Activated CD4-positive, alpha-beta memory T cell treated with anti-CD3 and anti-CD28 coated beads for 36 hours (primary cell): ENCODE measurements at regions of chr4 and their contacts with region 1.

Region 1: GRCh38 chr4:169270810-169271691 is at the start of gene SH3RF1:
- DNase-seq: peak; percentile 40
- H3K4me3 Mint-ChIP-seq: peak within 1 kb of the TSS; percentile 67
- H3K27ac Mint-ChIP-seq: no peak within 1 kb of the TSS
- H3K4me1 Mint-ChIP-seq: peaks cover 3% of the 10 kb centered on the region
- H3K27me3 Mint-ChIP-seq: peaks cover 44% of the 10 kb centered on the region
- total RNA-seq, gene SH3RF1: 0.19 to 0.24 TPM

Region 2: GRCh38 chr4:169254546-169254983 is 16.5 kb before region 1 on chr4:
- CTCF ChIA-PET with region 1: no interaction called
- POLR2A ChIA-PET with region 1: no interaction called
- intact Hi-C with region 1: no loop called
- DNase-seq: no peak
- H3K4me3 Mint-ChIP-seq: no peak overlapping the region
- H3K27ac Mint-ChIP-seq: no peak overlapping the region
- H3K4me1 Mint-ChIP-seq: no peaks in the 10 kb centered on the region
- H3K27me3 Mint-ChIP-seq: peaks cover 14% of the 10 kb centered on the region

Region 3: DNA sequence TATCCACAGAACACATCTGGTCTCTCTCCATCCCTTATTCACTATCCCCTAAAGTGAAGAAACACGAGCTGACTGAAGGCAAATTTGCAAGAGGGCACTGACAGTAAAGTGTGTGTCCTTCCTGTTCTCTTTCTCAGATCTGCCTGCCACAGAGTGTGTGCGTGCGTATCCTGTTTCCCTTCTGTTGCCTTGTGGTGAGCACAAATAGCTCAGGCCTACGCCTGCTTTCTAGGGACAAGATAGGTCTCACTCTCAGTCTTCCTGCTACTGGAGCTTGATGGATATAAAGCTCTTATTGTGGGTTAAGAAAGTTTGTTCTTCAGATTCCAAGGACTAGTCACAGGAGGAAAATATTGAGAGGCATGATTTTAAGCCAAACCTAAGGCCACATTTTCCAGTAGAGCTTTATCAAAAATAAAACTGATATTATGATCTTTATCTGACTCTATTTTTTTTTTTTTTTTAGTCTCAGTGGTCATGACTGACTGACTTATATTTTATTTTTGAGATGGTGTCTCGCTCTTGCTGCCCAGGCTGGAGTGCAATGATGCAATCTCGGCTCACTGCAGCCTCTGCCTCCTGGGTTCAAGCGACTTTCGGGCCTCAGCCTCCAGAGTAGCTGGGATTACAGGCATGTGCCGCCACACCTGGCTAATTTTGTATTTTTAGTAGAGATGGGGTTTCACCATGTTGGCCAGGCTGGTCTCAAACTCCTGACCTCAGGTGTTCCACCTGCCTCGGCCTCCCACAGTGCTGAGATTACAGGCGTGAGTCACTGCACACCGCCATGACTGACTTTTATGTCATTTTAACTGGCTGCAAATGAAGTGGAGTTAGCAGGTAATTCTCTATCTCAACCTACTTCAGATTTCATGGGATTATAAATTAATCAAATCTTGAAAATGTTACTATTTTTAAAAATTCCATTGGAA is 140.1 kb after region 1 on chr4:
- CTCF ChIA-PET with region 1: no interaction called
- POLR2A ChIA-PET with region 1: no interaction called
- intact Hi-C with region 1: loop called (anchors 10 kb)
- DNase-seq: peak; percentile 76
- H3K4me3 Mint-ChIP-seq: no peak overlapping the region
- H3K27ac Mint-ChIP-seq: peak overlapping the region; percentile 58
- H3K4me1 Mint-ChIP-seq: peaks cover 24% of the 10 kb centered on the region
- H3K27me3 Mint-ChIP-seq: no peaks in the 10 kb centered on the region